Activated T-helper 2 cell treated with anti-CD3 and anti-CD28 coated beads, Interferon-gamma antibody, Interleukin-2, Interleukin-4, amounts not matched to agents 10 μg/mL and 5 μg/mL and 100 μg/mL, durations not matched to agents 14 hours and 24 hours and 36 hours (primary cell): ENCODE measurements at regions of chr6 and their contacts with region 1.

Region 1: GRCh38 chr6:121436960-121437850 is 1.8 kb downstream of the GJA1 start:
- DNase-seq: no peak
- H3K4me3 Mint-ChIP-seq: peak overlapping the region; percentile 74
- H3K27ac Mint-ChIP-seq: no peak overlapping the region
- H3K4me1 Mint-ChIP-seq: peaks cover 12% of the 10 kb centered on the region
- H3K27me3 Mint-ChIP-seq: peaks cover 42% of the 10 kb centered on the region

Region 2: DNA sequence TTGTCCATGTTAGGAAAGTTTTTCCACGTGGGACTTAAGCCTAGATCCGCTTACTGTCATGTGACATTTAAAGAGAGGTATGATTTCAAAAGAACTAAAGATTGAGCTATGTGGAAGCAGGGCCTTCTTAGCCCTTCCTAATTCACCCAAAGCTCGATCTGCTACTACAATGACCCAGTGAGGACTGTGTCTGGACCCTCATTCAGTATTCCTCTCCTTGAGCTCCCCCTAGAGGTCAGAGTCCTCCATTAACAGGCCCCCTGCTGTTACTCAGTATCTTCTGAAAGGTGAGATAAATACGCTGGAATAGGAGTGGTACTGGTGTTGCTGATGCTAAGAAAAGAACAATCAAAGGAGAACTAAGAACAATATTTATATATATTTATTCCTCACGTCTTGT is 412.3 kb after region 1 on chr6:
- intact Hi-C with region 1: loop called (anchors 2 kb)
- DNase-seq: no peak
- H3K4me3 Mint-ChIP-seq: no peak overlapping the region
- H3K27ac Mint-ChIP-seq: no peak overlapping the region
- H3K4me1 Mint-ChIP-seq: no peaks in the 10 kb centered on the region
- H3K27me3 Mint-ChIP-seq: no peaks in the 10 kb centered on the region